ENCODE measurements at regions of chr7 and their contacts with region 1.

Region 1: DNA sequence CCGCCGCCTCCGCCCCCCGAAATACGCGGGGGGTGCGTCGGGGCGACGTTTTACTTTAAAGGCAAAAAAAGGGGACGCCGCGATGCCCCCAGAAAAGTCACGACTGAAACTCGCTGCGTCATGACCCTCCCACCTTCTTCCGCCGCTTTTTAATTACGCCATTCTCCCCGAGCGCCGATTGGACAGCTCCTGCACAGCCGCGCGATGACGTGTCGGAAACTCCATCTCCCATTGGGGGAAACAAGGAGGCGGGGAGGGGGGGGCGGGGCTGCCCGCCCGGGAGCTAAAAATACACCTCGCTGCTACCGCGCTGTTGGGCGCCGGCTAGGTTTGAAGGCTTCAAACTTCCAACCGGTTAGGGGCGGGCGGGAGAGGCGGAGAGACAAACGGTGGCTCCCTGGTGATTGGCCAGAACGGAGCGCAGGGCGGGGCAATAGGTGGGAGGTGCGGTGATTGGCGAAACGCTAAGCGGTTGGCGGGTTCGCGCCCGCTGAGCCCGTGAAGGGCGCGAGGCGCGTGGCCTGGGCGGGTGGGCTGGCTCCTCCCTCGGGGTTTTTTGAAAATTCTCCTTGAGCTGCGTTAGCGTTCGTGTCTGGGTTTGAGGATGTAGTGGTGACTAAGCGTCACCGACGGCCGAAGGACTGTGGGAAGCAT is at the start of gene RHEB:
- DNase-seq: peak; percentile 98 to 99
- H3K4me3 ChIP-seq: peak within 1 kb of the TSS; percentile 87
- H3K27ac ChIP-seq: peak within 1 kb of the TSS; percentile 94
- H3K4me1 ChIP-seq: peaks cover 37% of the 10 kb centered on the region
- H3K27me3 ChIP-seq: no peaks in the 10 kb centered on the region
- CTCF ChIP-seq: no peak
- total RNA-seq, gene RHEB: 201 and 202 TPM in 2 replicates

Region 2: GRCh38 chr7:150631866-150632864 is 887.7 kb before region 1 on chr7 and contains the start of gene GIMAP6:
- CTCF ChIA-PET with region 1: no interaction called
- POLR2A ChIA-PET with region 1: no interaction called
- intact Hi-C with region 1: no loop called
- DNase-seq: no peak
- H3K4me3 ChIP-seq: no peak within 1 kb of the TSS
- H3K27ac ChIP-seq: no peak within 1 kb of the TSS
- H3K4me1 ChIP-seq: no peaks in the 10 kb centered on the region
- H3K27me3 ChIP-seq: 0 out of 2 replicates have a peak, but pooled peaks cover 17% of the 10 kb centered on the region
- CTCF ChIP-seq: no peak
- total RNA-seq, gene GIMAP6: not detected in 2 replicates

Region 3: GRCh38 chr7:151261529-151261928 is 258.4 kb before region 1 on chr7:
- CTCF ChIA-PET with region 1: no interaction called
- POLR2A ChIA-PET with region 1: no interaction called
- intact Hi-C with region 1: no loop called
- DNase-seq: no peak
- H3K4me3 ChIP-seq: no peak overlapping the region
- H3K27ac ChIP-seq: no peak overlapping the region
- H3K4me1 ChIP-seq: no peaks in the 10 kb centered on the region
- H3K27me3 ChIP-seq: peaks cover 89% of the 10 kb centered on the region
- CTCF ChIP-seq: no peak

Region 4: DNA sequence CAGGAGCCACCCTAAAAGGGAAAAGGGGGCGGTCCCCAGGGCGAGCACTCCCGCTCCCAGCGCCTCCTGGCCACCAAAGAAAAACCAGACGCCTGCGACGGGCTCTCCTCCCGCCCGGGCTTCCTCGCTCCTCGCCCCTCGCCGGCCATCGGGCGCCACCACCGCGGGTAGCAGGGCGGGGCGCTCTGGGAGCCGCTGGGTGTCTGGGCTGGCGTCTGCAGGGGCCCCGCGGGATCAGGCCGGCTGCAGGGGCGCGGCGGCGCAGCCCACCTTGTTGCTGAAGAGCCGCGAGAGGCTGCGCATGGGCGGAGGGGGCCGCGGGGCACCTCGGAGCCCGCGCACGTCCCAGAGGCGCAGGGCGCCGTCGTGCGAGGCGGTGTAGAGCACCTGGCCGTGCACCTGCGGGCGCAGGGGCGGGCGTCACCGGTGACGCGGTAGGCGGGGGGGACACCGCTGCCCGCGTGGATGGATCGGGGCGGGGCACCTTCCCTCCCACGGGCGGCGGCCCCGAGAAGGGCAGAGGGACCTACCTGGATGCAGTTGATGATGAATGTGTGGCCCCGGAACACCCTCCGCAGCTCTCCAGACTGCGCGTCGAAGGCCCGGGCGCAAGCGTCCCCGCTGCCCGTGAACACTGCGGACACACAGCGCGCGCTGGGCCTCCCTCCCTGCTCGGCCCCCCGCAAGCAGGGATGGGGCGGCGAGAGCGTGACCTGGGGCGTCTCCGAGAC is 138.4 kb before region 1 on chr7:
- CTCF ChIA-PET with region 1: no interaction called
- POLR2A ChIA-PET with region 1: interaction called, 11 read pairs
- intact Hi-C with region 1: no loop called
- DNase-seq: no peak
- H3K4me3 ChIP-seq: no peak overlapping the region
- H3K27ac ChIP-seq: no peak overlapping the region
- H3K4me1 ChIP-seq: peaks cover 4% of the 10 kb centered on the region
- H3K27me3 ChIP-seq: no peaks in the 10 kb centered on the region
- CTCF ChIP-seq: no peak

Region 5: DNA sequence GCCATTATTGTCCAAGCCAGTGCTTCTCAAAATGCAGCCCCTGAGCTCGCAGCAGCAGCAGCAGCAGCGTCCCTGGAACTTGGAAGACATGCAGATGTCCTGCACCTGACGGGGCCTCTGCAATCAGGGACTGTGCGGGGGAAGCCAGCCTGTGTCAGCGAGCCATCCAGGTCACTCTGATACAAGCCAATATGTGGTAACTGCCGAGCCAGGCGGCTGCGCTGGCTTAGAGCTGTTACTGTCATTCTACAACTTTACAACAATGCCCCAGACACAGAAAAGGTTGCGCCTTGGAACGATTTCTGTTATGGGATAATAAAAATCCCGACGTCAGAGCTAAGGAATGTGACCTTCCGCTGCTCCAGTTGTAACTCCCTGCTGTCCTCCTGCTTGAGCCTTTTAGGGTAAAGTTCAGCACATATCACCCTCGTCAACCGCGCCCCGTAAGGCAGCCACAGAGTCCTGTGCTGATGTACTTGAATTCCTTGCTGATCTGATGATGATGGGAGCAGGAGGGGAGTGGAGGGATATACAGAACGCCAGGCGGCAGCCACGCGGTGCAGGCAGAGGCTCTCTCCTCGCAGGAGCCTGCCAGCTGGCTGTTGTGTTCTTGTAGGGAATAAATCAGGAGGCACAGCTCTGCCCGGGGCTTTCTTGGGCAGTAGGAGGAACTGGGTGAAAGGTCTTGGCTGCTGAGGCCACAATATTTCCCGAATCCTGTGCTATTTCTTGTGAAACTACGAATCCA is 60.0 kb before region 1 on chr7:
- CTCF ChIA-PET with region 1: no interaction called
- POLR2A ChIA-PET with region 1: interaction called, 4 read pairs
- intact Hi-C with region 1: loop called (anchors 2 kb)
- DNase-seq: peak; percentile 86 to 97
- H3K4me3 ChIP-seq: peak overlapping the region; percentile 44; the same call in 1 of the 2 replicates
- H3K27ac ChIP-seq: peak overlapping the region; percentile 75
- H3K4me1 ChIP-seq: peaks cover 29% of the 10 kb centered on the region
- H3K27me3 ChIP-seq: no peaks in the 10 kb centered on the region
- CTCF ChIP-seq: no peak

Region 6: DNA sequence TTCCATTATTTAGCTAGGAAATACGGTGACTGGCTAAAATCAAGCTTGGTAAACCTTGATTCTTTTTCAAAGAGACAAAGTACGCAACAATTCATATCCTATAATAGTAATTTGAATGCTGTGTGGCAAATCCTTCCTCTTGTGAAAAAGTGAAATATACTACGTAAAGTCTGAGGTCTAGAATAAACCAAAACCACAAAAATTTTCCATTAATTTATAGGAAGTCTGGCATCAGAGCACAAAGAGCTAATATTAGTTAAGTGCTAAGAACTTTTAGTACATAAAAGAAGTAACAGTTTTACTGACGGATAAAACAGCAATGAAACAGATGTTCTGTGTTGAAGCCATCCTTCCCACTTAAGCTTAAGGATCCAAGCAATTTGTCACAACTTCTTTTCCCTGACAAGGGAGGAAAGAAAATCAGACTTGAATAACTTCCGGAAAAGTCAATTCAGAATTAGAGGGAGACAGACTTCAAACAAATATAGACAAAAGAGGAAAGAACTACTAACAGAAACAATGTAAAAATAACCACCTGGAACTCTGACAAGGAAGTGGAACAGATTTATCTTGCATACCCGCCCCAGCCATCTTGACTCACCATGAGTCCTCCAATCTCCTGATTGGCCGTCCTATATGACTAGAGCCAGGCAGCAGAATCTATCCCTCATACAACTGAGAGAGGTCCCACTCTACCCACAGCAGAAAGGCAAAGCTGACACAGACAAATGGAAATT is 34.8 kb before region 1 on chr7:
- CTCF ChIA-PET with region 1: interaction called, 4 read pairs
- POLR2A ChIA-PET with region 1: interaction called, 3 read pairs
- intact Hi-C with region 1: loop called (anchors 1 kb)
- DNase-seq: peak; percentile 66 to 79
- H3K4me3 ChIP-seq: no peak overlapping the region
- H3K27ac ChIP-seq: peak overlapping the region; percentile 41
- H3K4me1 ChIP-seq: peaks cover 45% of the 10 kb centered on the region
- H3K27me3 ChIP-seq: no peaks in the 10 kb centered on the region
- CTCF ChIP-seq: no peak

Region 7: GRCh38 chr7:151550656-151551286 is 30.9 kb after region 1 on chr7:
- CTCF ChIA-PET with region 1: interaction called, 6 read pairs
- POLR2A ChIA-PET with region 1: interaction called, 9 read pairs
- intact Hi-C with region 1: loop called (anchors 2 kb)
- DNase-seq: peak in 1 of 2 experiments; percentile 12
- H3K4me3 ChIP-seq: no peak overlapping the region
- H3K27ac ChIP-seq: no peak overlapping the region
- H3K4me1 ChIP-seq: peaks cover 32% of the 10 kb centered on the region
- H3K27me3 ChIP-seq: no peaks in the 10 kb centered on the region
- CTCF ChIP-seq: no peak

Region 8: GRCh38 chr7:151744656-151745638 is 225.1 kb after region 1 on chr7:
- CTCF ChIA-PET with region 1: no interaction called
- POLR2A ChIA-PET with region 1: interaction called, 26 read pairs
- intact Hi-C with region 1: loop called (anchors 5 kb)
- DNase-seq: peak; percentile 96 to 100
- H3K4me3 ChIP-seq: no peak overlapping the region; the same call in 1 of the 2 replicates
- H3K27ac ChIP-seq: peak overlapping the region; percentile 81
- H3K4me1 ChIP-seq: peaks cover 44% of the 10 kb centered on the region
- H3K27me3 ChIP-seq: no peaks in the 10 kb centered on the region
- CTCF ChIP-seq: peak; percentile 70

Measured in PC-9 (cell line).